Astrocyte of the cerebellum (primary cell): ENCODE measurements at regions of chr10 and their contacts with region 1.

Region 1: GRCh38 chr10:13787015-13787421 is 200.3 kb downstream of the PRPF18 start:
- DNase-seq: no peak
- H3K4me3 ChIP-seq: no peak overlapping the region
- CTCF ChIP-seq: no peak

Region 2: DNA sequence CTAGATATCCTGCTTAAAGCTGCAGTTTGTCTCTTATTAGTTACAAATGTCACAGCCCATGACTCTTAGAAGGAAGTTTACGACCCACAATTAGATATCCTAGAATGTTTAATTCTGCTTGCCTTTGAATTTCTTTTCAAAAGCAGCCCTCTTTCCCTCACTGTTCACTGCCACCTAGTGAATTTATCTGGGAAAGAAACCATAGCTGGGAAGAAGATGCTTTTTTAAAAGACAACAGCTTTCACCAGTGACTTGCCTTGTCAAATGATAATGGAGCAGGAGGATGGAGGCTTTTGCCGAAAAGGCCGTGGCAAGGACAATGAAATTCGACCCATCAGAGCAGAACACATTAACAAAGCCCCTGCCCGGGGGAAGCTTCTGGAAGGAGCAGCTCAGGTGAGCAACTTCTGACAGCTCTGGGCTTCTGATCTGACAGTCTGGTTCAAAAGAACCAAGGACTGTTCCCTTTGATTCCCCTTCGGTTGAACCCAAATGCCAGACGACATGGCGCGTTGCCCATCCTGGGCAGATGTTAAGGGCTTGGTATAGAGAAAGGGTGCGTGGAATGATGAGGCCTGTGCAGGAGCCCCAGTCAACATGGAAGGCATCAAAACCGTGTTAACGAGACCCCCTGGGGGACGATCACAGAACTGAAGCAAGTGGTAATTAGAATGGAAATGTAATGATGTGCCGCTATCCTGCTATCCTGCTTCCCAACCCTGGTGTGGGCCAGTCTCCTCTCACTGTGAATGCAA is 306.9 kb after region 1 on chr10:
- in situ Hi-C with region 1: loop called (anchors 5 kb)
- DNase-seq: peak; percentile 33
- H3K4me3 ChIP-seq: no peak overlapping the region
- CTCF ChIP-seq: peak; percentile 62

Region 3: GRCh38 chr10:14349081-14349480 is 562.1 kb after region 1 on chr10:
- in situ Hi-C with region 1: no loop called
- DNase-seq: no peak
- H3K4me3 ChIP-seq: no peak overlapping the region
- CTCF ChIP-seq: no peak